Mammary epithelial cell (primary cell): ENCODE measurements at regions of chr19 and their contacts with region 1.

Region 1: DNA sequence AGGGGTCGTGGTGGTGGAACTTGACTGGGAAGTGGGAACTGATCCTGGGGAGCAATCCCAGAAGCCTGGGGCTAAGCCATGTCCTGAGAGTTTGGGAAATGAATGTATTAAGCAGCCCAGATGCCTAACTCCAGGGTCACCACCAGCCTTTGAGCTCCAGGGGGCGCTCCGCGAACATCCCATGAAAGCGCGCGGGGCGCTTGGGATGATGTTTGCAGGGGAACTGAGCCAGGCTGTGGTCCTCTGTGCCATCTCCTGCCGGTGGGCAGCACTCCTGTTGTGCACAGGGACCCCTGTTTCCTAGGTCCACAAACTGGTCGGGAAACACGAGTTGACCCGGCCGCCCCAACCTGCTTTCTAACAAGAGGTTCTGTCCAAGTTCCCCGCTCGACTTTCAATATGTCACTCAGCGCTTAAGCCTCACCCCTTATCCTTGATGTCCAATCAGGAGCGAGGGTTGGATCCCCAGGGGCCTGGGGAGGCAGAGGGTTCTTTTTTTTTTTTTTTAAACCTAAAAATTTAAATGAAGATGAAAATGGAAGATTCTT is 14.4 kb downstream of the LEUTX start:
- DNase-seq: peak; percentile 58
- H3K4me3 ChIP-seq: peak overlapping the region; percentile 18 to 51 (median 39)
- H3K27ac ChIP-seq: no peak overlapping the region
- H3K4me1 ChIP-seq: no peaks in the 10 kb centered on the region
- H3K27me3 ChIP-seq: peaks cover 5% of the 10 kb centered on the region
- CTCF ChIP-seq: peak; percentile 79 to 98

Region 2: DNA sequence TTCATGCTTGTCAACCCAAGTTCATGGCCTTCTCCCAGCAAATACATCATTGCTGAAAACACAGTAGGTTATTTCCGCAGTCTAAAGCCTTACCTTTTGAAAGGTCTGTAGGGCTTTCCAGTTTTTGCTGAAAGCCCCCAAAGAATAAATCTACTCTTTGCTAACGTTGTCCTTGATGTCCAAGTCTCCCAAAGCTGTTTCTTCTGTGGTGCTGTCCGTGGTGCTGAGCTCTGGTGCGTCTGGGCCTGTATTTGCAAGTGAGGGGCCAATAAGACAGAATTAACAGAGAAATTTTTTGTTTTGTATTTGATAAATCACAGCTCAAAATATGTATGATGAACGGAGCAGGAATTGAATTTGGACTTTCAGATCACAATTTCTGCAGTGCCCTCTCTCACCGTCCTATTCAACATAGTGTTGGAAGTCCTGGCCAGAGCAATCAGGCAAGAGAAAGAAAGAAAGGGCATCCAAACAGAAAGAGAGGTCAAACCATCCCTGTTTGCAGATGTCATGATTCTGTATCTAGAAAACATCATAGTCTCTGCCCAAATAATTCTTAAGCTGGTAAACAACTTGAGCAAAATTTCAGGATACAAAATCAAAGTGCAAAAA is 147.2 kb before region 1 on chr19:
- CTCF ChIA-PET with region 1: no interaction called
- dilution Hi-C with region 1: no loop called
- in situ Hi-C with region 1: no loop called
- intact Hi-C with region 1: no loop called
- DNase-seq: no peak
- H3K4me3 ChIP-seq: no peak overlapping the region
- H3K27ac ChIP-seq: no peak overlapping the region
- H3K4me1 ChIP-seq: no peaks in the 10 kb centered on the region
- H3K27me3 ChIP-seq: peaks cover 2% of the 10 kb centered on the region
- CTCF ChIP-seq: no peak

Region 3: DNA sequence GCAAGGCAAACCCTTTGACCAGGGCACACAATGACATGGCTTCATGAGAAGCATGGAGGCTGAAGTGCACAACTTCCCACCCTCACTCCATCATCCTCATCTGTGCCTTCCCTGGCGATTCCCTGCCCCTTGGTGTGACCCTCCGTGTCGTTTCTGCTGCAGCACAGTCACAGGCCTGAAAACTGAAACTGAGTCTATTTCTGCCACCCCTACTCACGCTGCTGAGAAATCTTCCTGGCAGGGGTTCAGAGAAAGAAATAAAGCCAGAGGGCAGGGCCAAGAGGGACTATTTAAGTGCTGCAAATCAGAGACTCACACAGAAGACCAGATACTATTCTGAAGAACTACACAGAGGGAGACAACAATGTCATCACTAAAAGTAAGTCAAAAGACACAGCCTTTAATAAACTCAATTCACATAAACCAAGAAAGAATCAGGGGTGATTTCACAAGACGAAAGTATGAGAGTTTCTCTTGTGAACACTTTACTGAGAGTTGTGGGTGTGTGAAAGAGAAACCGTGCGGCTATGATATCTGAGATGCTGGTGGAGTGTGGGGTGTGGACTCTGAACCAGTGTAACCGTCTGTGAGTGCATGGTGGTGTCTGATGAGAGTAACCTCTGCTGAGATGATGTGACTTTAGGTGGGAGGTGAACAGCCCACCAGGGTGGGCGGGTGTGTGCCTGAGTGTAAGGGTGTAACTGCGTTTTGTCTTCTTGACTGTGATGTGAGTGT is 113.8 kb before region 1 on chr19:
- CTCF ChIA-PET with region 1: no interaction called
- dilution Hi-C with region 1: loop called (anchors 5 kb)
- in situ Hi-C with region 1: no loop called
- intact Hi-C with region 1: no loop called
- DNase-seq: no peak
- H3K4me3 ChIP-seq: no peak overlapping the region
- H3K27ac ChIP-seq: no peak overlapping the region
- H3K4me1 ChIP-seq: no peaks in the 10 kb centered on the region
- H3K27me3 ChIP-seq: no peaks in the 10 kb centered on the region
- CTCF ChIP-seq: no peak

Region 4: GRCh38 chr19:39834287-39834840 is 41.3 kb after region 1 on chr19:
- CTCF ChIA-PET with region 1: no interaction called
- dilution Hi-C with region 1: no loop called
- in situ Hi-C with region 1: no loop called
- intact Hi-C with region 1: no loop called
- DNase-seq: no peak
- H3K4me3 ChIP-seq: peak overlapping the region in 1 of 3 experiments; percentile 6
- H3K27ac ChIP-seq: no peak overlapping the region
- H3K4me1 ChIP-seq: peaks cover 7% of the 10 kb centered on the region
- H3K27me3 ChIP-seq: no peaks in the 10 kb centered on the region
- CTCF ChIP-seq: no peak

Region 5: GRCh38 chr19:39970675-39971379 is 177.8 kb after region 1 on chr19 and contains the start of gene PSMC4:
- CTCF ChIA-PET with region 1: interaction called, 4 read pairs
- dilution Hi-C with region 1: no loop called
- in situ Hi-C with region 1: no loop called
- intact Hi-C with region 1: loop called (anchors 1 kb)
- DNase-seq: peak; percentile 99
- H3K4me3 ChIP-seq: peak within 1 kb of the TSS; percentile 76 to 89 (median 82)
- H3K27ac ChIP-seq: peak within 1 kb of the TSS; percentile 83
- H3K4me1 ChIP-seq: peaks cover 13% of the 10 kb centered on the region
- H3K27me3 ChIP-seq: no peaks in the 10 kb centered on the region
- CTCF ChIP-seq: peak; percentile 60 to 87
- total RNA-seq, gene PSMC4: 85.9 to 100 TPM

Region 6: GRCh38 chr19:40221858-40222837 is 429.1 kb after region 1 on chr19:
- CTCF ChIA-PET with region 1: no interaction called
- dilution Hi-C with region 1: no loop called
- in situ Hi-C with region 1: no loop called
- intact Hi-C with region 1: loop called (anchors 1 kb)
- DNase-seq: peak; percentile 78
- H3K4me3 ChIP-seq: no peak overlapping the region
- H3K27ac ChIP-seq: no peak overlapping the region
- H3K4me1 ChIP-seq: peaks cover 26% of the 10 kb centered on the region
- H3K27me3 ChIP-seq: no peaks in the 10 kb centered on the region
- CTCF ChIP-seq: peak; percentile 75 to 85